Naive thymus-derived CD8-positive, alpha-beta T cell (primary cell): ENCODE measurements at regions of chr17 and their contacts with region 1.

Region 1: GRCh38 chr17:67475236-67475937 is 98.3 kb downstream of the PITPNC1 start:
- DNase-seq: peak; percentile 68 to 91 (median 85)
- ATAC-seq: peak; percentile 70 to 75
- H3K4me3 Mint-ChIP-seq: peak overlapping the region; percentile 66 to 84 (median 76)
- H3K27ac Mint-ChIP-seq: peak overlapping the region; percentile 90 to 98 (median 96)
- H3K4me1 Mint-ChIP-seq: peaks cover 49 to 79% (median 71%) of the 10 kb centered on the region in 4 donors
- H3K27me3 Mint-ChIP-seq: no peaks in the 10 kb centered on the region

Region 2: DNA sequence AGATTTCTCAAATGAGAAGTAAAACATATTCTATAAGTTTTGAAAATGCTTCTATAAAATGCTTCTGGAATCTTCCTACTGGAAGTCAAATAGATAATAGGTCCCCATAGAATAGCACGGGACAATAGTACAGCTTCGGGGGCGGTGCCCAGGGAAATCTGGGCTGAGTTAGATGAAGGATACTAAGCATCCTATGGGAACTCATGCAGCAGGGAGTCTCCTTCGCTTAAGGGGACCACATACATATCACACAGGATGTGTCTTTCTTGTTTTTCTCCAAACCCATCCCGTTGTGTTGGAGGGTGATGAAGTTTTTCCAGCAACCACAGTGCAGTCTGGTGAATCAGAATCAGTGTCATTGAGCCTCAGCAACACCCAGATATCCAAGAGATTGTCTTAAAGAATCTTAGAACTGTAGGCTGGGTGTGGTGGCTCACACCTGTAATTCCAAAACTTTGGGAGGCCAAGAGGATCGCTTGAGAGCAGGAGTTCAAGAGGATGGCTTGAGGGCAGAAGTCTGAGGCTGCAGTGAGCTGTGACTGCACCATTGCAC is 14.1 kb before region 1 on chr17:
- POLR2A ChIA-PET with region 1: interaction called, 824 read pairs
- DNase-seq: no peak
- ATAC-seq: peak; percentile 10 to 35
- H3K4me3 Mint-ChIP-seq: peak overlapping the region in 8 of 10 donors; percentile 7 to 84 (median 71)
- H3K27ac Mint-ChIP-seq: peak overlapping the region; percentile 77 to 100 (median 98)
- H3K4me1 Mint-ChIP-seq: peaks cover 34 to 83% (median 78%) of the 10 kb centered on the region in 4 donors
- H3K27me3 Mint-ChIP-seq: no peaks in the 10 kb centered on the region

Region 3: GRCh38 chr17:67503184-67503583 is 27.8 kb after region 1 on chr17:
- POLR2A ChIA-PET with region 1: no interaction called
- DNase-seq: no peak
- ATAC-seq: no peak
- H3K4me3 Mint-ChIP-seq: peak overlapping the region in 6 of 10 donors; percentile 8 to 61 (median 42)
- H3K27ac Mint-ChIP-seq: peak overlapping the region in 5 of 10 donors; percentile 19 to 87 (median 28)
- H3K4me1 Mint-ChIP-seq: peaks cover 50 to 87% (median 85%) of the 10 kb centered on the region in 4 donors
- H3K27me3 Mint-ChIP-seq: no peaks in the 10 kb centered on the region

Region 4: GRCh38 chr17:67534941-67535340 is 59.6 kb after region 1 on chr17:
- POLR2A ChIA-PET with region 1: no interaction called
- DNase-seq: no peak
- ATAC-seq: no peak
- H3K4me3 Mint-ChIP-seq: no peak overlapping the region
- H3K27ac Mint-ChIP-seq: peak overlapping the region in 2 of 10 donors; percentile 13 to 51
- H3K4me1 Mint-ChIP-seq: peaks cover 12 to 24% (median 17%) of the 10 kb centered on the region in 4 donors
- H3K27me3 Mint-ChIP-seq: no peaks in the 10 kb centered on the region